CD8-positive, alpha-beta memory T cell (primary cell): ENCODE measurements at regions of chr19 and their contacts with region 1.

Region 1: GRCh38 chr19:3821857-3822364 is 35.7 kb upstream of the MATK start:
- DNase-seq: peak; percentile 83 to 90 (median 86)
- H3K4me3 ChIP-seq: no peak overlapping the region
- H3K4me3 Mint-ChIP-seq: peak overlapping the region; percentile 1 to 66 (median 47)
- H3K27ac ChIP-seq: no peak overlapping the region
- H3K27ac Mint-ChIP-seq: peak overlapping the region in 7 of 8 donors; percentile 47 to 91 (median 80)
- H3K4me1 ChIP-seq: peaks cover 9% of the 10 kb centered on the region
- H3K4me1 Mint-ChIP-seq: peaks cover 8 to 22% (median 10%) of the 10 kb centered on the region in 3 donors
- H3K27me3 ChIP-seq: no peaks in the 10 kb centered on the region
- H3K27me3 Mint-ChIP-seq: no peaks in the 10 kb centered on the region

Region 2: GRCh38 chr19:3762501-3763459 is 59.1 kb before region 1 on chr19 and contains the start of gene MRPL54:
- CTCF ChIA-PET with region 1: interaction called, 63 read pairs
- POLR2A ChIA-PET with region 1: interaction called, 8 read pairs
- DNase-seq: peak; percentile 98 to 100 (median 100)
- H3K4me3 ChIP-seq: peak within 1 kb of the TSS; percentile 98
- H3K4me3 Mint-ChIP-seq: peak within 1 kb of the TSS; percentile 96 to 99 (median 98)
- H3K27ac ChIP-seq: peak within 1 kb of the TSS; percentile 100
- H3K27ac Mint-ChIP-seq: peak within 1 kb of the TSS; percentile 100
- H3K4me1 ChIP-seq: peaks cover 45% of the 10 kb centered on the region
- H3K4me1 Mint-ChIP-seq: peaks cover 38 to 62% (median 42%) of the 10 kb centered on the region in 3 donors
- H3K27me3 ChIP-seq: no peaks in the 10 kb centered on the region
- H3K27me3 Mint-ChIP-seq: peaks cover 0 to 7% of the 10 kb centered on the region in 2 donors
- total RNA-seq, gene MRPL54: 85.0 to 95.3 TPM

Region 3: GRCh38 chr19:3783660-3784584 is 38.0 kb before region 1 on chr19:
- CTCF ChIA-PET with region 1: interaction called, 15 read pairs
- POLR2A ChIA-PET with region 1: interaction called, 9 read pairs
- DNase-seq: peak in 4 of 5 donors; percentile 38 to 68 (median 55)
- H3K4me3 ChIP-seq: no peak overlapping the region
- H3K4me3 Mint-ChIP-seq: peak overlapping the region; percentile 83 to 95 (median 90)
- H3K27ac ChIP-seq: no peak overlapping the region
- H3K27ac Mint-ChIP-seq: peak overlapping the region; percentile 67 to 96 (median 89)
- H3K4me1 ChIP-seq: peaks cover 14% of the 10 kb centered on the region
- H3K4me1 Mint-ChIP-seq: peaks cover 27 to 40% (median 36%) of the 10 kb centered on the region in 3 donors
- H3K27me3 ChIP-seq: no peaks in the 10 kb centered on the region
- H3K27me3 Mint-ChIP-seq: peaks cover 0 to 1% of the 10 kb centered on the region in 2 donors

Region 4: GRCh38 chr19:3798137-3798536 is 23.8 kb before region 1 on chr19:
- CTCF ChIA-PET with region 1: interaction called, 26 read pairs
- POLR2A ChIA-PET with region 1: interaction called, 4 read pairs
- DNase-seq: peak in 2 of 5 donors; percentile 58 to 70
- H3K4me3 ChIP-seq: no peak overlapping the region
- H3K4me3 Mint-ChIP-seq: peak overlapping the region; percentile 28 to 80 (median 67)
- H3K27ac ChIP-seq: no peak overlapping the region
- H3K27ac Mint-ChIP-seq: peak overlapping the region; percentile 68 to 93 (median 80)
- H3K4me1 ChIP-seq: peaks cover 32% of the 10 kb centered on the region
- H3K4me1 Mint-ChIP-seq: peaks cover 33 to 56% (median 33%) of the 10 kb centered on the region in 3 donors
- H3K27me3 ChIP-seq: no peaks in the 10 kb centered on the region
- H3K27me3 Mint-ChIP-seq: peaks cover 0 to 2% of the 10 kb centered on the region in 2 donors

Region 5: DNA sequence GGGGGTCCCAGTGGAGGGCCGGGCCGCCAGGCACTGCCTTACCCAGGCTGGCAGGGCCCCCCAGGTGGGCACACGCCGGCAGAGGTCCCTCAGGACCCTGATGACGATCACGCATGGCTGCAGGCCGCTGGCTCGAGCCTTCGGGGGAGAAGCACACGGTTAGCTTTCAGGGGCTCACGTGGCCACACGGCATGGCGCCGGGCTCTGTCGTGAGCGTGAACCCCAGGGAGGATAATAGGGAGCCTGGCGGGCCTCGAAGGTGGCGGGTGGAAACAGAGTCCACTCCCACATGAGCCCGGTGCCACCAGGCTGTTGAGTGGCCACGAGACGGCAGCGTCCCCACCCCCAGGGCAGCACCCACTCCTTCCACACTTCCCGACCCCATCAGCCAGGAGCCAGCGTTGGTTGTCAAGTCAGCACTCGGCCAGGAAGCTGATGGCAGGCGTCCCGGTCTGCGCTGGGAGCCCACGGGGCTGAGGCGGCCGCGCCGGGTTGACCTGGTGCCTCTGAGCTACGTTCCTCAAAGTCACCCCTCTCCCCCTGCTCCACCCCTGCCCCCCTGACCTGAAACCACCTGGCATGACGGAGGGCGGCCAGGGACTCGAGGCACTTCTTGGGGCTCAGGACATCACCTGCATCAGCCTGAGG is 11.1 kb before region 1 on chr19:
- CTCF ChIA-PET with region 1: interaction called, 16 read pairs
- POLR2A ChIA-PET with region 1: interaction called, 4 read pairs
- DNase-seq: no peak
- H3K4me3 ChIP-seq: no peak overlapping the region
- H3K4me3 Mint-ChIP-seq: peak overlapping the region in 1 of 7 donors; percentile 51
- H3K27ac ChIP-seq: no peak overlapping the region
- H3K27ac Mint-ChIP-seq: peak overlapping the region in 2 of 8 donors; percentile 43 to 70
- H3K4me1 ChIP-seq: peaks cover 39% of the 10 kb centered on the region
- H3K4me1 Mint-ChIP-seq: peaks cover 43 to 67% (median 50%) of the 10 kb centered on the region in 3 donors
- H3K27me3 ChIP-seq: no peaks in the 10 kb centered on the region
- H3K27me3 Mint-ChIP-seq: no peaks in the 10 kb centered on the region

Region 6: GRCh38 chr19:3907626-3908265 is 85.8 kb after region 1 on chr19:
- CTCF ChIA-PET with region 1: no interaction called
- POLR2A ChIA-PET with region 1: no interaction called
- DNase-seq: no peak
- H3K4me3 ChIP-seq: no peak overlapping the region
- H3K4me3 Mint-ChIP-seq: no peak overlapping the region
- H3K27ac ChIP-seq: no peak overlapping the region
- H3K27ac Mint-ChIP-seq: no peak overlapping the region
- H3K4me1 ChIP-seq: no peaks in the 10 kb centered on the region
- H3K4me1 Mint-ChIP-seq: no peaks in the 10 kb centered on the region
- H3K27me3 ChIP-seq: no peaks in the 10 kb centered on the region
- H3K27me3 Mint-ChIP-seq: peaks cover 6 to 8% of the 10 kb centered on the region in 2 donors